ENCODE measurements at regions of chr5 and their contacts with region 1.

Region 1: DNA sequence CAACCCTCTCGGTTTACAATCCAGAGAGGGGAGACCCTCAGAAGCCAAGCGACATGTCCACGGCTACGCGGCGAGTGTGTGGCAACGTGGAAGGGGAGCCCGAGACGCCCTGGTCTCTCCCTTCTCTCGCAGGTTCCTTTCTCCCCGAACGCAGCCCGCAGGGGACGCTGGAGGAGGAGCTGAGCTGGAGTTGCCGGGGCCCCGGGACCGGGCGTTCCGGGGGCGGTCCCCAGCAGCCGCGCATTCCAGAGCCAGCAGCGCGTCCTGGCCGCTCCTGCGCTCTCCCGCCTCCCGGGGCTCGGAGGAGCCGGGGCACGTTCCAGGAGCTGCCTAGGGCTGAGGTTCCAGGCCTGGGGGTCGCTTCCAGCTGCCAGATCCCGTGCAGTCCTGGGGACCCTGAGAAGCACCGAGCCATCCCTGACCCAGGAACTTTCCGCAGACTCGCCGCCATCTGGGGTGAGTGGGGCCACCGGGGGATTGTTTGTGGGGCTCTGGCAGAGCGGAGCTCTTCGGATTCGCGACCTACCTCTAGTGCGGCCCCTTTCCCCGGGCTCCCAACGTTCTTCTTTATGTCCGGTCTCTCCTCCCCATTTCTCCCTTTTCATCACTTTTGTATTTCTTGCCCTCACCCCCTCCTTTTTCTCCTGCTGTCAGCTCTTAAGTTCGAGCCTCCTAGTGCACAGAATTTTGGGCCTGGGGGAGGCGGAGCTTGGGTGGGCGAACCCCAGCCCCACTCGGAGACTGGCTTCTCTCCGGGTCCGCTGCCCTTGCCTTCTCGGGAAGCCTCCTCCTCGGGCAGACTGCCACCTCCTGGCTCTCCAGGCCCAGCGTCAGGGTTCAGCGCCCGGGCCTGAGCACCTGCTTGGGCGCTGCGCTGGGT is at the start of gene SMIM3:
- DNase-seq: peak; percentile 84
- H3K4me3 Mint-ChIP-seq: peak within 1 kb of the TSS; percentile 99
- H3K27ac Mint-ChIP-seq: peak within 1 kb of the TSS; percentile 91
- H3K4me1 Mint-ChIP-seq: peaks cover 47% of the 10 kb centered on the region
- H3K27me3 Mint-ChIP-seq: no peaks in the 10 kb centered on the region
- CTCF ChIP-seq: peak; percentile 54
- total RNA-seq, gene SMIM3: 21.7 and 26.1 TPM in 2 replicates

Region 2: GRCh38 chr5:150449517-150450339 is 329.0 kb before region 1 on chr5 and contains the start of gene RPS14:
- CTCF ChIA-PET with region 1: interaction called, 4 read pairs
- POLR2A ChIA-PET with region 1: interaction called, 8 read pairs
- intact Hi-C with region 1: loop called (anchors 10 kb)
- DNase-seq: peak; percentile 98
- H3K4me3 Mint-ChIP-seq: peak within 1 kb of the TSS; percentile 85
- H3K27ac Mint-ChIP-seq: peak within 1 kb of the TSS; percentile 100
- H3K4me1 Mint-ChIP-seq: peaks cover 22% of the 10 kb centered on the region
- H3K27me3 Mint-ChIP-seq: no peaks in the 10 kb centered on the region
- CTCF ChIP-seq: peak; percentile 92
- total RNA-seq, gene RPS14: 5,481 and 5,921 TPM in 2 replicates

Region 3: DNA sequence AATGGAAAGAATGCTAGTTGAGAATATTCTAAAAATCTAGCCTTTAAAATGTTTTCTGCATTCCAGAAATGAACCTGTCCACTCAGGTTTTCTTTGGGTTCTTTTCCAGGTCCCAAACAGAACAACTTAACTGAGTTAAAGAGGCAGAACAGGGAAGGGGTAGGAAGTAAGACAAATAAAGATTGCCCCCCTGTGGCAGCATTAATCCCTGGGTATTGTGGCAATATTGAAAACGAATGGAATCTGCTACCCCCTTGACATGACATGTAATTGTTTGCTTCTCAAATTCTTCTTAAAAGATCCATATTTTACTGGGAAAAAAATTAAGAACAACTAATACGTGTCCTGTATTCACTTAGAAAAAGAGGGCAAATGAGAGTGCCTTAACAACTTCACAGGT is 68.6 kb before region 1 on chr5:
- CTCF ChIA-PET with region 1: interaction called, 10 read pairs
- POLR2A ChIA-PET with region 1: interaction called, 8 read pairs
- intact Hi-C with region 1: no loop called
- DNase-seq: peak; percentile 25
- H3K4me3 Mint-ChIP-seq: no peak overlapping the region
- H3K27ac Mint-ChIP-seq: no peak overlapping the region
- H3K4me1 Mint-ChIP-seq: no peaks in the 10 kb centered on the region
- H3K27me3 Mint-ChIP-seq: no peaks in the 10 kb centered on the region
- CTCF ChIP-seq: peak; percentile 27

Region 4: DNA sequence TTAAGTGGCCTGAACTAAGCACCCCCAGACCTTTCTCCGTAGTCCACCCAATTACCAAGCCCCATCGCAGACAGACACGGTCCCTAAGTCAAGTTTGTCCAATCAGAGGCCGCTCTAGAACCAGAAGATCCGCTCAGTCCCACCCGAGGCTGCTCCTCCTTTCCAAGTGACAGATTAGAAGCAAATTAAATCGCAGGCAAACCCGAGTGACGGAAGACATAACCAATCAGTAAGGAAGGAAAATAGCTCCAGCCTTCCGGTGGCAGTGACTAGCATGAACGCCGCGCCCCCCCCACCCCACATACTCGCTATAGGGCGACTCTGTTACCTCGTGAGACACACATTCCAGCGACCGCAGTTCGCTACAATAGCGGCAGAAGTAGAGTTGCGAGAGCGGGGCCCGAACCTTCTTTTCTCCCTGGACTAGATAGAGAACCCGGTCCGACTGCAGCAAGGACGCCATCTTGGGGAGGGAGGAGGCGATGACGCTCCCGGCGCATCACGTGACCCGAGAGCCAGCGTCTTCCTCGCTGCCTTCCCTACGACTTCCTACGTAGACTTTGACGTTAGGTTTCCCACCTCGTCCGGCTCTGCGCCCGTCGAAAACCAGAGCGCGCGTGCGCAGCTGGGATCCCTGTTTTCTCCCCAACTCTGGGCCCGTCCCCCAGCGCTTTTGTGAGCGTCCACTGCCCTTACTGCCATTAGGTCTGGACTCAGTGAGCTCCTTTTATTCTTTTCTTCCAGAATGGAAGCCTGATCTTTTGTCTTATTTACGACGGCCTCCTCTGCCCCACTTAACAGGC is 20.0 kb before region 1 on chr5 and contains the start of gene DCTN4:
- CTCF ChIA-PET with region 1: interaction called, 348 read pairs
- POLR2A ChIA-PET with region 1: interaction called, 541 read pairs
- intact Hi-C with region 1: loop called (anchors 1 kb)
- DNase-seq: peak; percentile 100
- H3K4me3 Mint-ChIP-seq: no peak within 1 kb of the TSS
- H3K27ac Mint-ChIP-seq: no peak within 1 kb of the TSS
- H3K4me1 Mint-ChIP-seq: peaks cover 34% of the 10 kb centered on the region
- H3K27me3 Mint-ChIP-seq: no peaks in the 10 kb centered on the region
- CTCF ChIP-seq: no peak
- total RNA-seq, gene DCTN4: 122 and 143 TPM in 2 replicates

Region 5: GRCh38 chr5:150801117-150801927 is 22.6 kb after region 1 on chr5:
- CTCF ChIA-PET with region 1: interaction called, 48 read pairs
- POLR2A ChIA-PET with region 1: interaction called, 9 read pairs
- intact Hi-C with region 1: no loop called
- DNase-seq: peak; percentile 87
- H3K4me3 Mint-ChIP-seq: peak overlapping the region; percentile 64
- H3K27ac Mint-ChIP-seq: peak overlapping the region; percentile 36
- H3K4me1 Mint-ChIP-seq: peaks cover 14% of the 10 kb centered on the region
- H3K27me3 Mint-ChIP-seq: no peaks in the 10 kb centered on the region
- CTCF ChIP-seq: peak; percentile 68

Region 6: GRCh38 chr5:150862070-150862469 is 83.3 kb after region 1 on chr5:
- CTCF ChIA-PET with region 1: no interaction called
- POLR2A ChIA-PET with region 1: no interaction called
- intact Hi-C with region 1: no loop called
- DNase-seq: no peak
- H3K4me3 Mint-ChIP-seq: no peak overlapping the region
- H3K27ac Mint-ChIP-seq: no peak overlapping the region
- H3K4me1 Mint-ChIP-seq: no peaks in the 10 kb centered on the region
- H3K27me3 Mint-ChIP-seq: no peaks in the 10 kb centered on the region
- CTCF ChIP-seq: no peak

Measured in MCF 10A (cell line).